Body of pancreas (tissue), 4 donors: ENCODE measurements at regions of chr2 and their contacts with region 1.

Region 1: DNA sequence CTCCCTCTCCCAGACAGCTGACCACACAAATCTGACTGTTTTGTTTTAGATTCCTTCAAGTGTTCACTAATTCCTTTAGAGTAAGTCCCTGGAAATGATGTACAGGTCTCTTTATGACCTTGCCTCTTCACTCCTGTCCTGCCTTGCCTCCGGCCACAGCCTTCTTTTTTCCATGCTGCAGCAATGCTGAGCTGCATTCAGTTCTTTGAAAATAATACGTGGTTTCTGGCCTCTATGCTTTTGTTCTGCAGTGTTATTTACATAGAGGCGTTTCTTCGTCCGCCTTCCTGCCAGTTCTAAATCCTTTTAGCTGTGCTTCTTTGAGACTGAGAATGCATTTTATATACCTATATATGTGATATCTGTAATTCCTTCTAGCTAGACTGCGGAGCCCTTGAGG is 87.2 kb downstream of the PPP1R1C start:
- DNase-seq: no peak
- ATAC-seq: no peak
- H3K4me3 ChIP-seq: no peak overlapping the region
- H3K27ac ChIP-seq: no peak overlapping the region
- H3K4me1 ChIP-seq: peaks cover 6% of the 10 kb centered on the region
- H3K27me3 ChIP-seq: no peaks in the 10 kb centered on the region
- CTCF ChIP-seq: no peak
- POLR2A ChIP-seq: no peak

Region 2: DNA sequence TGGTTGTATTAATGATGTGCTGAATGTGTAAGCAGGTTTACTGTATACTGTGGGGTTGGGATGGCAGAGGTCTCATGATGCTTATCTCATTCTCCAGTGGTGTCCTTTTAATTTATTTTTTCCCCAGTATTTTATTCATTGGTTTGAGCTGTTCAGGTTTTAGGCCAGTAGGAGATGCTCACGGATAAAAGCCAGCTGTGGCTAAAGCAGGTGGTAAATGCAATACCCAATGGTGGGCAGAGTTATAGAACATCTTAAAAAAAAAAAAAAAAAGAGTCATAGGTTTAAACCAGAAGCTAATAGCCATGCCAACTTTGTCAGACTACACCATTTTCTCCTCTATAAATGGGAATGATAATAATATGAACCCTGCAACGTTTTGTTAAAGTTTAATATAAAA is 334.8 kb before region 1 on chr2:
- intact Hi-C with region 1: loop called (anchors 5 kb)
- DNase-seq: peak in 2 of 4 donors; percentile 14 to 45
- ATAC-seq: peak; percentile 38
- H3K4me3 ChIP-seq: no peak overlapping the region
- H3K27ac ChIP-seq: no peak overlapping the region
- H3K4me1 ChIP-seq: peaks cover 15% of the 10 kb centered on the region
- H3K27me3 ChIP-seq: no peaks in the 10 kb centered on the region
- CTCF ChIP-seq: peak; percentile 6 to 70 (median 43)
- POLR2A ChIP-seq: no peak